Naive thymus-derived CD4-positive, alpha-beta T cell (primary cell): ENCODE measurements at regions of chr6 and their contacts with region 1.

Region 1: GRCh38 chr6:27838058-27838944 is 73.9 kb downstream of the OR2B2 start:
- DNase-seq: peak; percentile 65 to 96 (median 93)
- ATAC-seq: peak; percentile 86
- H3K4me3 ChIP-seq: peak overlapping the region; percentile 87
- H3K4me3 Mint-ChIP-seq: no peak overlapping the region
- H3K27ac ChIP-seq: peak overlapping the region; percentile 93
- H3K27ac Mint-ChIP-seq: no peak overlapping the region
- H3K4me1 ChIP-seq: peaks cover 22 to 34% of the 10 kb centered on the region in 2 donors
- H3K4me1 Mint-ChIP-seq: peaks cover 7 to 39% (median 29%) of the 10 kb centered on the region in 7 donors
- H3K27me3 ChIP-seq: no peaks in the 10 kb centered on the region
- H3K27me3 Mint-ChIP-seq: peaks cover 0 to 14% (median 7%) of the 10 kb centered on the region in 5 donors

Region 2: DNA sequence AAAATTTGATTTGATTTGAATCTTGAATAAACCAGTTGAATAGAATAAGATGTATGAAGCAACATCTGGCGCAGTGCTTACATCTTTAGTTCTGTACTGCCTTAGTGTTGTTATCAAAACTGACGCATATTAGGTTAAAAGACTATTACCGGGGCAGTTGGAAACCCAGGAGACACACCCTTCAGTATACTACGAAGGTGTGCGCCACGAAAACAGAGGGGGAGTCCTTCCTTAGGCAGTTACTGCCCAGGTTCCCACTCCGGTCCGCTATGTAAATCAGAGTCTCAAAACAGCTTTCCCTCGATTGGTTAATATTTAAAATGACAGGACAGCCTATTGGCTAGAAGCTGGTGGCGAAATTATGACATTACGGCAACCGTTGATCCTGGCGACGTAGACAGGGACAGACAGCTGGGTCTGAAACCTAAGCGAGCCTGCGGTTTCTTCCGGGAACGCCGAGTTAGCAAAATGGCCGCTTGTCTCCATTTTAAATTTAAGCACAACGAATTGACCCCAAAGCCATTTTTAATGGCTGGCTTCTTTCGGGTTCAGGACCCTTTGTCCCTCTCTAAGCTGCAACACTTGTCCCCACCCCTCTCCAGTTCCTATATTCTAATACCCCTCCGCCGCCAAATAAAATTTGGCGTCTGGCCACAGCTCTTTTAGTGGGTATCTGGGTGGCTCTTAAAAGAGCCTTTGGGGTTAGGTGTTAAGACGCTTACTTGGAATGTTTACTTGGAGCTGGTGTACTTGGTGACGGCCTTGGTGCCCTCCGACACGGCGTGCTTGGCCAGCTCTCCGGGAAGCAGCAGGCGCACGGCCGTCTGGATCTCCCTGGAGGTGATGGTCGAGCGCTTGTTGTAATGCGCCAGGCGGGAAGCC is 1715.3 kb before region 1 on chr6:
- CTCF ChIA-PET with region 1: no interaction called
- POLR2A ChIA-PET with region 1: interaction called, 92 read pairs
- intact Hi-C with region 1: loop called (anchors 2 to 5 kb)
- DNase-seq: peak; percentile 68 to 99 (median 96)
- ATAC-seq: peak; percentile 78
- H3K4me3 ChIP-seq: peak overlapping the region; percentile 94
- H3K4me3 Mint-ChIP-seq: peak overlapping the region; percentile 92 to 100 (median 98)
- H3K27ac ChIP-seq: peak overlapping the region; percentile 86
- H3K27ac Mint-ChIP-seq: peak overlapping the region; percentile 97 to 100 (median 99)
- H3K4me1 ChIP-seq: peaks cover 18 to 23% of the 10 kb centered on the region in 2 donors
- H3K4me1 Mint-ChIP-seq: peaks cover 22 to 54% (median 30%) of the 10 kb centered on the region in 7 donors
- H3K27me3 ChIP-seq: no peaks in the 10 kb centered on the region
- H3K27me3 Mint-ChIP-seq: peaks cover 0 to 21% (median 0%) of the 10 kb centered on the region in 5 donors

Region 3: DNA sequence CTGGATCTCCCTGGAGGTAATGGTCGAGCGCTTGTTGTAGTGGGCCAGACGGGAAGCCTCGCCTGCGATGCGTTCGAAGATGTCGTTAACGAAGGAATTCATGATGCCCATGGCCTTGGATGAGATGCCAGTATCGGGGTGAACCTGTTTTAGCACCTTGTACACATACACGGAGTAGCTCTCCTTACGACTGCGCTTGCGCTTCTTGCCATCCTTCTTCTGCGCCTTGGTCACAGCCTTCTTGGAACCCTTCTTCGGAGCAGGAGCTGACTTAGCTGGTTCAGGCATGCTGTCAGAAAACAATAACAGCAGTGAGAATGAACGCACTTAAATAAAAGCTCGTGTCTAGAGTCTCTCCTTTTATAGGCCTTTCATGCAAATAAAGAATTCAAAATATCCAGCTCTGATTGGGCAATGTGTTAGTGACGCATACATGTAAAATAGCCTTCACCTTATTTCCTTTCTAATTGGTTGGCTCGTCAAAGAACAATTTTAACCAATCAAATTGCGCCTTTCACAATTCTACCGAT is 1621.9 kb before region 1 on chr6:
- CTCF ChIA-PET with region 1: no interaction called
- POLR2A ChIA-PET with region 1: interaction called, 33 read pairs
- intact Hi-C with region 1: no loop called
- DNase-seq: peak; percentile 56 to 97 (median 93)
- ATAC-seq: peak; percentile 86
- H3K4me3 ChIP-seq: peak overlapping the region; percentile 72
- H3K4me3 Mint-ChIP-seq: no peak overlapping the region
- H3K27ac ChIP-seq: peak overlapping the region; percentile 84
- H3K27ac Mint-ChIP-seq: no peak overlapping the region
- H3K4me1 ChIP-seq: peaks cover 12 to 18% of the 10 kb centered on the region in 2 donors
- H3K4me1 Mint-ChIP-seq: peaks cover 3 to 31% (median 10%) of the 10 kb centered on the region in 7 donors
- H3K27me3 ChIP-seq: no peaks in the 10 kb centered on the region
- H3K27me3 Mint-ChIP-seq: no peaks in the 10 kb centered on the region

Region 4: GRCh38 chr6:26285143-26286134 is 1552.9 kb before region 1 on chr6:
- CTCF ChIA-PET with region 1: no interaction called
- POLR2A ChIA-PET with region 1: interaction called, 3 read pairs
- intact Hi-C with region 1: loop called in 1 of 2 experiments (anchors 10 kb)
- DNase-seq: peak; percentile 72 to 97 (median 92)
- ATAC-seq: peak; percentile 91
- H3K4me3 ChIP-seq: peak overlapping the region; percentile 88
- H3K4me3 Mint-ChIP-seq: peak overlapping the region; percentile 86 to 96 (median 90)
- H3K27ac ChIP-seq: peak overlapping the region; percentile 91
- H3K27ac Mint-ChIP-seq: peak overlapping the region; percentile 91 to 100 (median 98)
- H3K4me1 ChIP-seq: peaks cover 0 to 8% of the 10 kb centered on the region in 2 donors
- H3K4me1 Mint-ChIP-seq: peaks cover 7 to 48% (median 33%) of the 10 kb centered on the region in 7 donors
- H3K27me3 ChIP-seq: no peaks in the 10 kb centered on the region
- H3K27me3 Mint-ChIP-seq: peaks cover 0 to 9% (median 5%) of the 10 kb centered on the region in 5 donors

Region 5: DNA sequence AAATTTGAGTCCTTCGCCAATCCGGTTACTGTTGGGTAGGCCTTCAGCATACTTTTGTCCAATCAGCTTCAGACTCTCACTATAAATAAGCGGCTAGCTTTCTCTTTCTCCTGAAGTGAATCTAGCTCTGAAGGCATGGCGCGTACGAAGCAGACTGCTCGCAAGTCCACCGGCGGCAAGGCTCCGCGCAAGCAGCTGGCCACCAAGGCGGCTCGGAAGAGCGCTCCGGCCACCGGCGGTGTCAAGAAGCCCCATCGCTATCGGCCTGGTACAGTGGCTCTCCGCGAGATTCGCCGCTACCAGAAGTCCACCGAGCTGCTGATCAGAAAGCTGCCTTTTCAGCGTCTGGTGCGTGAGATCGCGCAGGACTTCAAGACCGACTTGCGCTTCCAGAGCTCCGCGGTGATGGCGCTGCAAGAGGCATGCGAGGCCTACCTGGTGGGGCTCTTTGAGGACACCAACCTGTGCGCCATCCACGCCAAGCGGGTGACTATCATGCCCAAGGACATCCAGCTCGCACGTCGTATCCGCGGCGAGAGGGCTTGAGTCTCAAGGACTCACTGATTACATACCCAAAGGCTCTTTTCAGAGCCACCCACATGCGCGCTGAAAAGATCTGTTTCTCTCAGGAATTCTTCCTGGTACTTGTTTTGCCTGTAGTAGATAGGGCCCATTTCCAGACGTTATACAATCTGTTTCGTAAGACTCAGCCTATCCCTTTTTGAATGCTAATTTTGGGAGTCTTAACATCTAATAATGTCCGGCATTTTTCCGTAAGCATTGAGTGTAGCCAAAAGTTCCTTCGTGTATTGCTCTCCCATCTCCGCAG is 28.1 kb before region 1 on chr6:
- CTCF ChIA-PET with region 1: interaction called, 15 read pairs
- POLR2A ChIA-PET with region 1: interaction called, 739 read pairs
- intact Hi-C with region 1: loop called (anchors 1 kb)
- DNase-seq: peak; percentile 66 to 96 (median 92)
- ATAC-seq: peak; percentile 71
- H3K4me3 ChIP-seq: peak overlapping the region; percentile 76
- H3K4me3 Mint-ChIP-seq: peak overlapping the region; percentile 81 to 97 (median 94)
- H3K27ac ChIP-seq: peak overlapping the region; percentile 86
- H3K27ac Mint-ChIP-seq: peak overlapping the region; percentile 95 to 99 (median 98)
- H3K4me1 ChIP-seq: peaks cover 20 to 42% of the 10 kb centered on the region in 2 donors
- H3K4me1 Mint-ChIP-seq: peaks cover 18 to 82% (median 61%) of the 10 kb centered on the region in 7 donors
- H3K27me3 ChIP-seq: no peaks in the 10 kb centered on the region
- H3K27me3 Mint-ChIP-seq: peaks cover 0 to 9% (median 0%) of the 10 kb centered on the region in 5 donors

Region 6: DNA sequence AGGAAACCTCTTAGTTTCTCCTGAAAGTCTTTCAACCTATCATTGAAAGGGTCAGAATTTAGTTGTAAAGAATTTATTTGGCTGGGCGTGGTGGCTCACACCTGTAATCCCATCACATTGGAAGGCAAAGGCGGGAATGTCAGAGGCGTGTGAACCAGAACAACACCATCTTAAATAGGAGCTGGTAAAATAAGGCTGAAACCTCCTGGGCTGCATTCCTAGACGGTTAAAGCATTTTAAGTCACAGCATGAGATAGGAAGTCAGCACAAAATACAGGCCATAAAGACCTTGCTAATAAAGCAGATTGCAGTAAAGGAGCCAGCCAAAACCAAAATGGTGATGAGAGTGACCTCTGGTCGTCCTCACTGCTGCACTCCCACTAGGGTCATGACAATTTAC is 44.3 kb after region 1 on chr6:
- CTCF ChIA-PET with region 1: no interaction called
- POLR2A ChIA-PET with region 1: interaction called, 11 read pairs
- intact Hi-C with region 1: no loop called
- DNase-seq: no peak
- ATAC-seq: no peak
- H3K4me3 ChIP-seq: no peak overlapping the region
- H3K4me3 Mint-ChIP-seq: no peak overlapping the region
- H3K27ac ChIP-seq: no peak overlapping the region
- H3K27ac Mint-ChIP-seq: no peak overlapping the region
- H3K4me1 ChIP-seq: no peaks in the 10 kb centered on the region
- H3K4me1 Mint-ChIP-seq: peaks cover 0 to 11% (median 0%) of the 10 kb centered on the region in 7 donors
- H3K27me3 ChIP-seq: no peaks in the 10 kb centered on the region
- H3K27me3 Mint-ChIP-seq: no peaks in the 10 kb centered on the region